GM23248 (cell line): ENCODE measurements at regions of chr11 and their contacts with region 1.

Region 1: GRCh38 chr11:25981998-25982397 is 349.9 kb upstream of the ANO3 start:
- DNase-seq: peak; percentile 80
- H3K4me3 ChIP-seq: no peak overlapping the region
- H3K27ac ChIP-seq: no peak overlapping the region
- H3K4me1 ChIP-seq: peaks cover 5% of the 10 kb centered on the region; the same call in 1 of the 2 replicates
- H3K27me3 ChIP-seq: no peaks in the 10 kb centered on the region

Region 2: GRCh38 chr11:24617856-24618255 is 1364.1 kb before region 1 on chr11:
- in situ Hi-C with region 1: no loop called
- DNase-seq: no peak
- H3K4me3 ChIP-seq: no peak overlapping the region
- H3K27ac ChIP-seq: no peak overlapping the region
- H3K4me1 ChIP-seq: no peaks in the 10 kb centered on the region
- H3K27me3 ChIP-seq: no peaks in the 10 kb centered on the region

Region 3: GRCh38 chr11:26134481-26135355 is 152.7 kb after region 1 on chr11:
- in situ Hi-C with region 1: loop called (anchors 10 kb)
- DNase-seq: peak; percentile 28
- H3K4me3 ChIP-seq: no peak overlapping the region
- H3K27ac ChIP-seq: no peak overlapping the region
- H3K4me1 ChIP-seq: no peaks in the 10 kb centered on the region
- H3K27me3 ChIP-seq: no peaks in the 10 kb centered on the region

Region 4: GRCh38 chr11:26227296-26227695 is 245.3 kb after region 1 on chr11:
- in situ Hi-C with region 1: loop called (anchors 5 kb)
- DNase-seq: peak; percentile 91
- H3K4me3 ChIP-seq: peak overlapping the region; percentile 52
- H3K27ac ChIP-seq: peak overlapping the region; percentile 91
- H3K4me1 ChIP-seq: peaks cover 52% of the 10 kb centered on the region
- H3K27me3 ChIP-seq: no peaks in the 10 kb centered on the region

Region 5: GRCh38 chr11:26665036-26665435 is 683.0 kb after region 1 on chr11:
- in situ Hi-C with region 1: no loop called
- DNase-seq: no peak
- H3K4me3 ChIP-seq: no peak overlapping the region
- H3K27ac ChIP-seq: no peak overlapping the region
- H3K4me1 ChIP-seq: no peaks in the 10 kb centered on the region
- H3K27me3 ChIP-seq: no peaks in the 10 kb centered on the region